Lower leg skin (tissue), 4 donors: ENCODE measurements at regions of chr16 and their contacts with region 1.

Region 1: DNA sequence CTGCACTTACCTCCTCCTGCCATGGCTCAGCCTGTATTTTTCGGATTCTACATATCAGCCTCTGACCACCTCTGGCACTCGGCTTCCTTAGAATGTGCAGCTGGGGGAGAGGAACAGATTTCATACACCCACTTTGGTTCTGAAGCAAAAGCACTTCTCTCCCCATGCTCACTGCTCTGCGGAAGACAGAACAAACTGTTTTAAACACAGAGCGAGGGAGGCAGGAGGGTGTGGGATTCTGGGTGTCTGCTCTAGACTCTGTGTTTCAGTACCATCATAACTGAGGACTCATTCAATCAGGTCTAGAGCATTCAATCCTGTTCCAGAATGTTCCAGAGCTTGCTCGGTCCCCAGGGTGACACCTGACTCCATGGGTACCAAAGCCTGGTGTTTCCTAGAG is 239.1 kb downstream of the GRIN2A start:
- DNase-seq: no peak
- H3K4me3 ChIP-seq: no peak overlapping the region
- CTCF ChIP-seq: no peak
- POLR2A ChIP-seq: no peak

Region 2: DNA sequence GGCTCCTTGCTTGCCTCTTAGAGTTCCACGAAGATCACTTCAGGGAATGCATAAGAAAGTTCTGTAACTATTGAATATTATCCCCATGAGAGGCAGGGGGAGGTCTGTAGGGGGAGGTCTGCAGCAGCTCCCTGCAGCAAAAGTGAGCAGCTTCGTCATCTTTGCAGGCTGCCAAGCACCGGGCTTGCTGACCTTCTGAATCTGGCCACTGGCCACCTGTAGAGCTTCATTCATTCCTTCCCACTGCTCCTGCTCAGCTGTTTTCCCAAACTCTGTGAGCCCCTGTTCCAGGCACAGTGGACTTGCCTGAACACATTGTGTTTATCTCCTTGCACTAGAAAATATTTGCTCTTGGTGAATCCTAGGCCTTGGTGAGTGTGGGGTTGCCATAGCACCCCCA is 408.4 kb before region 1 on chr16:
- intact Hi-C with region 1: loop called (anchors 5 kb)
- DNase-seq: no peak
- H3K4me3 ChIP-seq: no peak overlapping the region
- CTCF ChIP-seq: no peak
- POLR2A ChIP-seq: no peak